Ovary (tissue), 10 donors: ENCODE measurements at regions of chr16 and their contacts with region 1.

Region 1: DNA sequence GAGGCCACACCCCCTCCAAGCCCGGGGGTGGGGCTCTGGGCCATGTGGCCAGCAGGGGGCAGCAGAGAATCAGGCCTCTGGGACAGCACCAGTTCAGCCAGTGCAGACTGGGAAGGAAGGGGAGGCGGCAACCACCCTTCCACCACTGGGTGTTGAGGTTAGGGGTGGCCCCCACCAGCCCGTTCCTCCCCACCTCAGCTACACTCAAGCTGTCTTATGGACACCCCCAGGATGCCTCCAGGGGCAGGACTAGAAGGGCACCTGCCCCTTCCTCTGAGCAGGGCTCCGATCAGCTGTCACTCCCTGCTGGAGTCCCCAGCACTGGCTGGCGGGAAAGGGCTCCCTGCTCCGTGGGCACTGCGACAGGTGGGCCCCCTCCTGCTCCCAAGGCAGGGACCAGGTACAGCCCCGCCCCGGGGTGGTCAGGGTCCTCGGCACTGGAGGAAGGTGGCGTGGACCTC is 21.8 kb downstream of the KATNB1 start:
- DNase-seq: peak; percentile 84 to 93 (median 91)
- H3K4me3 ChIP-seq: no peak overlapping the region
- H3K27ac ChIP-seq: peak overlapping the region in 1 of 2 donors; percentile 8
- H3K4me1 ChIP-seq: no peaks in the 10 kb centered on the region
- H3K27me3 ChIP-seq: no peaks in the 10 kb centered on the region
- CTCF ChIP-seq: peak; percentile 89 to 99 (median 93)
- EP300 ChIP-seq: no peak
- POLR2A ChIP-seq: no peak

Region 2: DNA sequence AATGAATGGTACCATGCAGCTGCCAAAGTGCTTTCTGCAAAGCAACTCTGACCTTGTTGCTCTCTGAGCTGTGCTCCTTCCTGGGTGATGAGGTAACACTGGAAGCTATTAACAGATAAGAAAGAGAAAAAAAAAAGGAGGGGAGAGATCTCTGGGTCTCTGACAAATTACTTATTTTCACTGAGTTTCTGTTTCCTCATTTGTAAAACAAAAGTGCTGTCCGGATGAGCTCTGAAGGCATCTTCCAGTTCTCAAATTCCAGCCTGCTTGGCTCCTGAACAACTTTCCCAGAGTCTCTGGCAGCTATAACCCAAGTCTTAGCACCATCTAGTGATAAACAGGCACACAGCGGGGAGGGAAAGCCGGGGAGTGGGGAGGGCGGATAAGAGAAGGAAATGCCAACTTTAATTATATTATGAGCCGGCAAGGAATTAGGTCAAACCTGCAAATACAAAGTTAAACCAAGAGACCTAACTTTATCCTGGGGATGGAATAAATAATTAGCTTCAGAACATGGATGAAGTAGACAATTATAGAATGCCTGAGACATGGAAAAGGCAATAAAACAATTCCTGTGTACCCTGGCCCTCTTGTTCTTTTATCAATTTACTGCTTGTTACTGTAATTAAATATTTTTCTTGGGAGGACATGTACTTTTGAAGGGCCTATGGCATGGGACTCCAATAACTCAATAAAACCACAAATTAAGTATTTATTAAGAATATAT is 106.2 kb after region 1 on chr16:
- intact Hi-C with region 1: loop called (anchors 2 to 10 kb)
- DNase-seq: peak; percentile 53 to 71 (median 61)
- H3K4me3 ChIP-seq: no peak overlapping the region
- H3K27ac ChIP-seq: no peak overlapping the region
- H3K4me1 ChIP-seq: no peaks in the 10 kb centered on the region
- H3K27me3 ChIP-seq: no peaks in the 10 kb centered on the region
- CTCF ChIP-seq: peak in 2 of 3 donors; percentile 46 to 48
- EP300 ChIP-seq: no peak
- POLR2A ChIP-seq: no peak

Region 3: DNA sequence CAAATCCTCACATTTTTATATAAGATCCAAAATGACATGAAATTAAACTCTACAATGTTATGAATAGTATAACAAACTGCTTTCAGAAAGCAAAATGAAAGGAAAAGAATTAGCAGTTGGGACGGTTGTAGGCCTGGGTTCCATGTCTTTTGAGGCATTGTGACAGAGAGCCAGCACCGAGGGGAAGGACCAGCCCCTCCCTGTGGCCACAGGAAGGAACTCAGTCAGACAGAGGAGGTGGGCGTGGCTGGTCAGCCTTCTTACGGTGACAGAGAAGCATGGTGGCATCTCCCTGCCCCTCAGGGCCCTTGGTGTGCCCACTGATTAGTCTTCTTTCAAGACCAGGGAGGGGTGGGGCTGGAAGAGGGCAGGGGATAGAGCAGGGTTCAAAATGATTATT is 237.4 kb after region 1 on chr16:
- intact Hi-C with region 1: loop called in 2 of 4 experiments (anchors 5 to 10 kb)
- DNase-seq: no peak
- H3K4me3 ChIP-seq: no peak overlapping the region
- H3K27ac ChIP-seq: no peak overlapping the region
- H3K4me1 ChIP-seq: peaks cover 3% of the 10 kb centered on the region
- H3K27me3 ChIP-seq: no peaks in the 10 kb centered on the region
- CTCF ChIP-seq: no peak
- EP300 ChIP-seq: no peak
- POLR2A ChIP-seq: no peak

Region 4: GRCh38 chr16:58000706-58001676 is 243.6 kb after region 1 on chr16 and contains the start of gene USB1:
- intact Hi-C with region 1: loop called (anchors 5 to 10 kb)
- DNase-seq: peak; percentile 80 to 92 (median 88)
- H3K4me3 ChIP-seq: peak within 1 kb of the TSS; percentile 69
- H3K27ac ChIP-seq: peak within 1 kb of the TSS; percentile 64 to 77
- H3K4me1 ChIP-seq: peaks cover 4% of the 10 kb centered on the region
- H3K27me3 ChIP-seq: no peaks in the 10 kb centered on the region
- CTCF ChIP-seq: peak; percentile 54 to 73 (median 58)
- EP300 ChIP-seq: no peak
- POLR2A ChIP-seq: peak; percentile 38
- total RNA-seq, gene USB1: 8.5 to 30.7 (median 22.5) TPM